OCI-LY7 (cell line): ENCODE measurements at regions of chr7 and their contacts with region 1.

Region 1: GRCh38 chr7:66634816-66635215 is 6.1 kb downstream of the KCTD7 start:
- DNase-seq: peak; percentile 90
- H3K4me3 ChIP-seq: peak overlapping the region; percentile 23
- H3K27ac ChIP-seq: peak overlapping the region; percentile 81
- H3K4me1 ChIP-seq: peaks cover 60% of the 10 kb centered on the region
- CTCF ChIP-seq: no peak

Region 2: GRCh38 chr7:66591799-66592596 is 42.8 kb before region 1 on chr7:
- CTCF ChIA-PET with region 1: no interaction called
- POLR2A ChIA-PET with region 1: interaction called, 10 read pairs
- intact Hi-C with region 1: no loop called
- DNase-seq: peak; percentile 94
- H3K4me3 ChIP-seq: peak overlapping the region; percentile 95
- H3K27ac ChIP-seq: peak overlapping the region; percentile 58
- H3K4me1 ChIP-seq: peaks cover 34% of the 10 kb centered on the region
- CTCF ChIP-seq: no peak